Motor neuron (in vitro differentiated cells): ENCODE measurements at regions of chr1 and their contacts with region 1.

Region 1: GRCh38 chr1:220281159-220281574 is 8.9 kb upstream of the RAB3GAP2 start:
- ATAC-seq: peak; percentile 43 to 75 (median 64)
- H3K4me3 ChIP-seq: no peak overlapping the region
- H3K27ac ChIP-seq: no peak overlapping the region
- H3K4me1 ChIP-seq: no peaks in the 10 kb centered on the region

Region 2: GRCh38 chr1:220420726-220421125 is 139.6 kb after region 1 on chr1:
- in situ Hi-C with region 1: no loop called
- ATAC-seq: peak in 3 of 8 experiments; percentile 72 to 97 (median 82)
- H3K4me3 ChIP-seq: no peak overlapping the region
- H3K27ac ChIP-seq: no peak overlapping the region
- H3K4me1 ChIP-seq: peaks cover 0 to 4% of the 10 kb centered on the region in 2 donors

Region 3: GRCh38 chr1:220527908-220528678 is 246.9 kb after region 1 on chr1 and contains the start of gene MARK1:
- in situ Hi-C with region 1: loop called in 1 of 9 experiments (anchors 25 kb)
- ATAC-seq: peak; percentile 73 to 91 (median 80)
- H3K4me3 ChIP-seq: peak within 1 kb of the TSS; percentile 65 to 98 (median 90)
- H3K27ac ChIP-seq: peak within 1 kb of the TSS; percentile 85 to 92
- H3K4me1 ChIP-seq: peaks cover 10 to 31% of the 10 kb centered on the region in 2 donors
- total RNA-seq, gene MARK1: 1.3 to 38.6 (median 31.4) TPM

Region 4: GRCh38 chr1:220733090-220733601 is 452.0 kb after region 1 on chr1:
- in situ Hi-C with region 1: loop called in 1 of 9 experiments (anchors 25 kb)
- ATAC-seq: peak; percentile 81 to 97 (median 88)
- H3K4me3 ChIP-seq: no peak overlapping the region
- H3K27ac ChIP-seq: no peak overlapping the region
- H3K4me1 ChIP-seq: no peaks in the 10 kb centered on the region

Region 5: DNA sequence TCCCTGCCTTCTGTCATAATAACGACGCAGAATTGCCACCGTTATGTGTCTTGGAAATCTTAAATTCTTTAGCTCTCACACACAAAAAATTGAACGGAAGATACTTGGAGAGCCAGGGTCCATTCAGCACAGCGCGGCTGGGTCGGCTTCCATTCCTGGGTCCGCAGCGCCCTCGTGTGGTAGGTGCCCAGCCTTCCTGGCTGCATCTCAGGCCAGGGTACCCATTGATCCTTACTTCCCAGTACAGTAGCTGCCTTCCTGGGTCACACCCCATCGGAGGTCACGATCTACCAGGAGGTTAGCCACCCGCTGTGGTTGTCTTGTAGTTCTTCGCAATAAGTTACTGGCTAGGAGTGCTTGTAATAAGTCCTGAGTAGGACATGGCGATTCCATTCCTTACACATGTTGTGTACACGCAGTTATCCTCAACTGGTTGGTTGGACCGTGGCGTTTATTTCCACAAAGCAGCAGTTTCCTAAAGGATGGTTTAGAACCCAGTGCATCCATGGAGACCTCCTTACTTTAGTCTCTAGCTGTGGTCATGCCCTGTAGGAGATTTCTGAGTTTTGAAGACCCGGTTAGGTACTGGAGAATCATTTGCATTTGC is 495.7 kb after region 1 on chr1:
- in situ Hi-C with region 1: loop called in 1 of 9 experiments (anchors 25 kb)
- ATAC-seq: peak; percentile 99 to 100 (median 100)
- H3K4me3 ChIP-seq: no peak overlapping the region
- H3K27ac ChIP-seq: no peak overlapping the region
- H3K4me1 ChIP-seq: no peaks in the 10 kb centered on the region